HepG2 (cell line): ENCODE measurements at regions of chr16 and their contacts with region 1.

Region 1: GRCh38 chr16:55944377-55944802 is 69.2 kb upstream of the CES5A start:
- DNase-seq: peak; percentile 50
- ATAC-seq: peak; percentile 94
- H3K4me3 ChIP-seq: no peak overlapping the region
- H3K27ac ChIP-seq: no peak overlapping the region
- H3K4me1 ChIP-seq: no peaks in the 10 kb centered on the region
- H3K27me3 ChIP-seq: no peaks in the 10 kb centered on the region; a peak in 1 of 5 replicates
- CTCF ChIP-seq: peak; percentile 90
- EP300 ChIP-seq: no peak
- POLR2A ChIP-seq: no peak
- RAD21 ChIP-seq: peak; percentile 51; the same call in 1 of the 2 replicates

Region 2: DNA sequence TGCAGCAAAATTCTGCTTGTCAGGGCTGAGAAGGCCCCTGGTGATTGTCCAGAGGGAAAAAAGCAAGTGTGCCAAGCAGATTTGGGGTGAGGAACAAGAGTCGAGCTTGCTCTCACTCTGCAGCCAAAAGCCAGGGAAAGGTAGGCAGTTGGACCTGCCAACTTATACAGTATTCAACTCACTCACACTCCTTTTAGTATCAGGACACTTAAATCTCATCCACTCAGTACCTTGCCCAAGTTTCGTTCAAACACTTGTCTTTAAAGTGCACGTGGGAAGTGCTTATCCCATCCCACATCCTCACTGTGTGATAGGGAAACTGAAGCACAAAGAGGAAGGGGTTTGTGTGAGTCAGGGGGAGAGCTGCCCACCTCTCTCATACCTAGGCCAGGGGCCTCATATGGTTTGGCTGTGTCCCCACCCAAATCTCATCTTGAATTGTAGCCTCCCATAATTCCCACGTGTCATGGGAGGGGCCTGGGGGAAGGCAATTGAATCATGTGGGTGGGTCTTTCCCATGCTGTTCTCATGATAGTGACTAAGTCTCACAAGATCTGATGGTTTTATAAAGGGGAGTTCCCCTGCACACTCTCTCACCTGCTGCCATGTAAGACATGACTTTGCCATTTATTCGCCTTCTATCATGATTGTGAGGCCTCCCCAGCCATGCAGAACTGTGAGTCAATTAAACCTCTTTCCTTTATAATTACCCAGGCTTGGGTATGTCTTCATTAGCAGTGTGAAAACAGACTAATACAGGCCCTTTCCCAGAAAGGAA is 43.6 kb before region 1 on chr16:
- CTCF ChIA-PET with region 1: no interaction called
- POLR2A ChIA-PET with region 1: no interaction called
- in situ Hi-C with region 1: no loop called
- intact Hi-C with region 1: no loop called
- DNase-seq: no peak
- ATAC-seq: no peak
- H3K4me3 ChIP-seq: no peak overlapping the region
- H3K27ac ChIP-seq: no peak overlapping the region
- H3K4me1 ChIP-seq: no peaks in the 10 kb centered on the region
- H3K27me3 ChIP-seq: no peaks in the 10 kb centered on the region
- CTCF ChIP-seq: no peak
- EP300 ChIP-seq: no peak
- POLR2A ChIP-seq: no peak
- RAD21 ChIP-seq: no peak

Region 3: GRCh38 chr16:55989565-55989900 is 45.1 kb after region 1 on chr16:
- CTCF ChIA-PET with region 1: no interaction called
- POLR2A ChIA-PET with region 1: no interaction called
- in situ Hi-C with region 1: no loop called
- intact Hi-C with region 1: no loop called
- DNase-seq: no peak
- ATAC-seq: no peak
- H3K4me3 ChIP-seq: no peak overlapping the region
- H3K27ac ChIP-seq: no peak overlapping the region
- H3K4me1 ChIP-seq: no peaks in the 10 kb centered on the region
- H3K27me3 ChIP-seq: no peaks in the 10 kb centered on the region
- CTCF ChIP-seq: no peak
- EP300 ChIP-seq: no peak
- POLR2A ChIP-seq: no peak
- RAD21 ChIP-seq: no peak

Region 4: GRCh38 chr16:56281256-56281805 is 336.9 kb after region 1 on chr16:
- CTCF ChIA-PET with region 1: interaction called, 7 read pairs
- POLR2A ChIA-PET with region 1: no interaction called
- in situ Hi-C with region 1: no loop called
- intact Hi-C with region 1: loop called (anchors 1 kb)
- DNase-seq: peak; percentile 24
- ATAC-seq: peak; percentile 71
- H3K4me3 ChIP-seq: no peak overlapping the region
- H3K27ac ChIP-seq: no peak overlapping the region
- H3K4me1 ChIP-seq: no peaks in the 10 kb centered on the region
- H3K27me3 ChIP-seq: peaks cover 0 to 4% of the 10 kb centered on the region in 2 experiments; a peak in 2 of 5 replicates
- CTCF ChIP-seq: peak; percentile 46
- EP300 ChIP-seq: no peak
- POLR2A ChIP-seq: no peak
- RAD21 ChIP-seq: no peak

Region 5: GRCh38 chr16:56317998-56318826 is 373.8 kb after region 1 on chr16:
- CTCF ChIA-PET with region 1: interaction called, 24 read pairs
- POLR2A ChIA-PET with region 1: no interaction called
- in situ Hi-C with region 1: loop called (anchors 5 kb)
- intact Hi-C with region 1: loop called (anchors 1 kb)
- DNase-seq: peak; percentile 62
- ATAC-seq: peak; percentile 95
- H3K4me3 ChIP-seq: peak overlapping the region in 1 of 3 experiments; percentile 11; a peak in 1 of 6 replicates
- H3K27ac ChIP-seq: no peak overlapping the region
- H3K4me1 ChIP-seq: no peaks in the 10 kb centered on the region
- H3K27me3 ChIP-seq: peaks cover 3 to 65% of the 10 kb centered on the region in 2 experiments
- CTCF ChIP-seq: peak; percentile 98
- EP300 ChIP-seq: no peak
- POLR2A ChIP-seq: no peak
- RAD21 ChIP-seq: peak; percentile 96